ENCODE measurements at regions of chr11 and their contacts with region 1.

Region 1: GRCh38 chr11:77525452-77526091 is 51.7 kb upstream of the PAK1 start:
- DNase-seq: no peak
- H3K4me3 ChIP-seq: no peak overlapping the region
- H3K27ac ChIP-seq: no peak overlapping the region
- H3K4me1 ChIP-seq: no peaks in the 10 kb centered on the region
- H3K27me3 ChIP-seq: no peaks in the 10 kb centered on the region
- CTCF ChIP-seq: no peak
- POLR2A ChIP-seq: no peak

Region 2: GRCh38 chr11:77542296-77542695 is 16.7 kb after region 1 on chr11:
- intact Hi-C with region 1: loop called (anchors 1 kb)
- DNase-seq: no peak
- H3K4me3 ChIP-seq: no peak overlapping the region
- H3K27ac ChIP-seq: no peak overlapping the region
- H3K4me1 ChIP-seq: no peaks in the 10 kb centered on the region
- H3K27me3 ChIP-seq: no peaks in the 10 kb centered on the region
- CTCF ChIP-seq: no peak
- POLR2A ChIP-seq: no peak

Measured in breast epithelium (tissue), 4 donors.